Activated naive CD4-positive, alpha-beta T cell treated with anti-CD3 and anti-CD28 coated beads for 36 hours (primary cell): ENCODE measurements at regions of chr16 and their contacts with region 1.

Region 1: DNA sequence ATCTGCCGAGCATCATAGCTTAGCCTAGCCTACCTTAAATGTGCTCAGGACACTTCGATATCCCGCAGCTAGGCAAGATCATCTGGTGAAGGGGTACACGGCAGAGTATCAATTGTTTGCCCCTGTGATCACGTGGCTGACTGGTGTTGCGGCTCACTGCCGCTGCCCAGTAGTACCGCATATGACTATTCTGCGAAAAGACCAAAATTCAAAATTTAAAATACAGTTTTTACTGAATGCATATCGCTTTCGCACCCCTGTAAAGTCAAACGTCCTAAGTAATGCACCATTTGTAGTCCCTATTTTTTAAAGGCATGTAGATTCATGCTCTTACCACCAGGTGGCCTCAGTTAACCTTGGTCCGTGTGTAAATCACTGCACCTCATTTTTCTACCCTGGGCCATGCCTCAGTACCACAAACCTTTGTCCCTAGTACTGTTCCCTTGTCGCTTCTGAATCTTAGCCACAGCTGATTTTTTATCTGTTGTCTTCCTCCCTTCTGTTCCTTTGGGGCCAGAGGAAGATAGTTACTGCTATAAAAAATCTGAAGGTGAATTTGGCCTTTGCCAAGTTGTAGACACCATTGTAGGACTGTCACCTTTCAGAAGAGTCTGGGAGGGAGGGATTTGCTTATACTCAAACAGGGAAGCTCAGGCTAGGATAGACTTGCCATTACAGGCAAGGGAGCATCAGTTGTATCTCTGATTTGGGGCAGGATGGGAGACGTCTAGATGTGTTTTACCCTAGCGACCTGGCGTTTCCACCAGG is 34.4 kb downstream of the WWP2 start:
- DNase-seq: peak; percentile 41
- H3K4me3 Mint-ChIP-seq: no peak overlapping the region
- H3K27ac Mint-ChIP-seq: no peak overlapping the region
- H3K4me1 Mint-ChIP-seq: no peaks in the 10 kb centered on the region
- H3K27me3 Mint-ChIP-seq: no peaks in the 10 kb centered on the region

Region 2: DNA sequence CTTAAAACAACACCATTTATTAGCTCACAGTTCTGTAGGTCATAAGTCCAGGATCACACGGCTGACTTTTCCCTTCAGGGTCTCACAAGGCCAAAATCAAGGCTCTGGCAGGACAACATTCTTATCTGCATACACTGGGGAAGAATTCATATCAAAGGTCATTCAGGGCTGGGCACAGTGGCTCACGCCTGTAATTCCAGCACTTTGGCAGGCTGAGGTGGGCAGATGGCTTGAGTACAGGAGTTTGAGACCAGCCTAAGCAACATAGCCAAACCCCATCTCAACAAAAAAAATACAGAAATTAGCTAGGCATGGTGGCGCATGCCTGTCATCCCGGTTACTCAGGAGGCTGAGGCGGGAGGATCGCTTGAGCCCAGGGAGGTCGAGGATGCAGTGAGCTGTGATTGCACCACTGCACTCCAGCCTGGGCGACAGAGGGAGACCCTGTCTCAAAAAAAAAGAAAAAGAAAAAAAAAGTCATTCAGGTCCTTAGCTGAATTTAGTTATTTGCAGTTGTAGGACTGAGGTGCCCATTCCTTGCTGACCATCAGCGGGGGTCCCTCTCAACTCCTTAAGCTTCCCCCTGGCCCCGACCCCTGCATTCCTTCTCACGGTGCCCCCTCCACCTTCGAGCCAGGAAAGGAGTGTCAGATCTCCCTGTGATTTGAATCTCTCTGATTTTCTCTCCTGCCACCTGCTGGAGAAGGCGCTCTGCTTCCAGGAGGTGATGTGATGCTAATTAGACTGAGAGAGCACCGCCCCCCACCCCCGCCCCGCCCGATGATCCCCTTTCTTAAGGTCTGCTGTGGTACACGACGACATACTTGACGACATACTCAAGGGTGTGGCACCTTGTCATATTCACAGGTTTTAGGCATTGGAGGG is 62.8 kb after region 1 on chr16:
- CTCF ChIA-PET with region 1: no interaction called
- intact Hi-C with region 1: loop called (anchors 2 kb)
- DNase-seq: peak; percentile 33
- H3K4me3 Mint-ChIP-seq: no peak overlapping the region
- H3K27ac Mint-ChIP-seq: no peak overlapping the region
- H3K4me1 Mint-ChIP-seq: no peaks in the 10 kb centered on the region
- H3K27me3 Mint-ChIP-seq: no peaks in the 10 kb centered on the region